Common myeloid progenitor, CD34-positive (primary cell): ENCODE measurements at regions of chr3 and their contacts with region 1.

Region 1: GRCh38 chr3:71050538-71051258 is 532.8 kb downstream of the FOXP1 start:
- DNase-seq: peak; percentile 36 to 85 (median 81)
- H3K4me3 ChIP-seq: peak overlapping the region in 2 of 7 experiments; percentile 1 to 43
- H3K27ac ChIP-seq: no peak overlapping the region
- H3K4me1 ChIP-seq: peaks cover 6 to 33% (median 26%) of the 10 kb centered on the region in 4 experiments
- H3K27me3 ChIP-seq: no peaks in the 10 kb centered on the region

Region 2: DNA sequence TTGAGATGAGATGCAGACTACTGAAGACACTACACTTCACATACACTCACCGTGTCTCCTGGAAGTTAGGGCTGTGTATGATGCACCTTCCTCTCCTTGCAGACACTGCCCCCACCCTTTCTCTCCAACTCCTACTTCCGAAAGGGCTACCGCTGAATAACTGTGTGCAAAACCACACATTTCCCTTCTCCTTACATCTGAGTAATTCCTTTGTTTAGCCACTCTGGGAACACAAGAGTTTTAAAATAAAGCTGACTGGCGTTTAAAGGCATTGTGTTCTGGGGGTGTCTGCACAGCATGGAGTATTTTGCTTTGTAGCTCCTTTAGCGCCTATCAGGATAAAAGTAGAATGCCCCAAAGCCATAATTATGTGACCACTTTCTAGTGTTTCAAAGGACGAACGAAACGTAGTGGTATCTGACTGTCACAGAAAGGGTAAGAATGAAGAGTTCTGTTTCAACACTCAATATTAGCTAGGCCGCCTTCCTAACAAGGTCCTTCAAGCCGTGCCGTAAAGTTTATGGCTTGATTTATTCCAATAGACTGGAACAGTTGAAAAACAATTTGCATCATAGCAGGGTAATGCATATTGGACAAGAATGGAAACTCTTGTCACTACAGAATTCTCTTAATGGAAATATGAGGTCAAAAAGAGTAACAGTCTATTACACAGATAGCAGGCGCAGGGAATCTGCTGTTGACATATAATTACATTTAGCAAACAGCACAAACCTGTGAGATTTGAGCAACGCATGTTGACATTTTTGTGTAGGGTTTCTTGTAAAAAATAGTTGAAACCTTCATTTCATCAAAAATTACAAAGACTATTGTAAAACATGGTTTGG is 87.0 kb before region 1 on chr3:
- CTCF ChIA-PET with region 1: no interaction called
- POLR2A ChIA-PET with region 1: no interaction called
- DNase-seq: no peak
- H3K4me3 ChIP-seq: no peak overlapping the region
- H3K27ac ChIP-seq: no peak overlapping the region
- H3K4me1 ChIP-seq: no peaks in the 10 kb centered on the region
- H3K27me3 ChIP-seq: no peaks in the 10 kb centered on the region

Region 3: GRCh38 chr3:71063773-71064287 is 13.1 kb after region 1 on chr3:
- CTCF ChIA-PET with region 1: interaction called, 54 read pairs
- POLR2A ChIA-PET with region 1: interaction called, 4 read pairs
- DNase-seq: peak in 1 of 3 donors; percentile 50
- H3K4me3 ChIP-seq: peak overlapping the region; percentile 7 to 89 (median 81)
- H3K27ac ChIP-seq: peak overlapping the region in 1 of 2 experiments; percentile 79
- H3K4me1 ChIP-seq: peaks cover 38 to 81% (median 58%) of the 10 kb centered on the region in 4 experiments
- H3K27me3 ChIP-seq: no peaks in the 10 kb centered on the region